ENCODE measurements at regions of chr20 and their contacts with region 1.

Region 1: DNA sequence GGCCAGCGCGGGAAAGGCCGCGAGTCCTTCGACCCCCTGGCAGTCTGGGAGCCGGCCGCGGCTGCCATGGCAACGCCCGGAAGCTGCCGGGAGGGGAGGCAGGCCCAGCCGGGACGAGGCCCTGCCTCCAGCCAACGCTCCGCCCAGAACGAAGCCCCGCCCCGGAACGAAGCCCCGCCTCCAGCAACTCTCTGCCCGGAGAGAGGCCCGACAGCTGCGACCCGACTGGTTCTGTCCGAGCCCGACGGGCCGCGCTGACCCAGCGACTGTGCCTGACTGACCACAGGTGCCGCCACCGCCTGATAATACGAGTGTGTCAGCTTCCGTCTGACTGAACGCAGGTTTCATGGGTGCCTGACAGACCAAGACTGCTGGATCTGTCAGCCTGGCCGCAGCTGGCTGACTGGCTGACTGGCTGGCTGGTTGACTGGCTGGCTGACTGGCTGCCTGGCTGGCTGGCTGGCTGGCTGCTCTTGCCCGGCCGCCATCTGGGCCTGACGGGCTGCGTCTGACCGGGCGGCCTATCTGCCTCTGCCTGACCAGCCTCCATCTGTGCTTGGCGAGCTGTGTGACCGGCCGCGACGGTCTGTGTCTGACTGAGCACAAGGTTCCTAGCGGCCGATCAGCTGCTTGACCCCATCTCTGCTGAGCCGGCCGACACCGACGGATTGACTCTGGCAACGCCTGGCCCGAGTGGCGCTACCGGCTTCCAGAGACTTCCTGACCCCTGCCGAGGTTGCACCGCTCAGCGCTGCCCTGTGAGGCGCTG is 89.7 kb upstream of the EPB41L1 start:
- DNase-seq: peak; percentile 95
- ATAC-seq: peak; percentile 98
- H3K4me3 Mint-ChIP-seq: peak overlapping the region; percentile 76
- H3K27ac Mint-ChIP-seq: no peak overlapping the region
- H3K4me1 Mint-ChIP-seq: no peaks in the 10 kb centered on the region
- H3K27me3 Mint-ChIP-seq: peaks cover 8% of the 10 kb centered on the region

Region 2: GRCh38 chr20:35771689-35772562 is 292.9 kb before region 1 on chr20 and contains the start of gene PHF20:
- CTCF ChIA-PET with region 1: no interaction called
- POLR2A ChIA-PET with region 1: interaction called, 3 read pairs
- intact Hi-C with region 1: loop called in 1 of 2 experiments (anchors 10 kb)
- DNase-seq: peak; percentile 100
- ATAC-seq: peak; percentile 91
- H3K4me3 Mint-ChIP-seq: peak within 1 kb of the TSS; percentile 81
- H3K27ac Mint-ChIP-seq: peak within 1 kb of the TSS; percentile 94
- H3K4me1 Mint-ChIP-seq: peaks cover 76% of the 10 kb centered on the region
- H3K27me3 Mint-ChIP-seq: no peaks in the 10 kb centered on the region
- total RNA-seq, gene PHF20: 54.3 to 61.6 TPM

Region 3: DNA sequence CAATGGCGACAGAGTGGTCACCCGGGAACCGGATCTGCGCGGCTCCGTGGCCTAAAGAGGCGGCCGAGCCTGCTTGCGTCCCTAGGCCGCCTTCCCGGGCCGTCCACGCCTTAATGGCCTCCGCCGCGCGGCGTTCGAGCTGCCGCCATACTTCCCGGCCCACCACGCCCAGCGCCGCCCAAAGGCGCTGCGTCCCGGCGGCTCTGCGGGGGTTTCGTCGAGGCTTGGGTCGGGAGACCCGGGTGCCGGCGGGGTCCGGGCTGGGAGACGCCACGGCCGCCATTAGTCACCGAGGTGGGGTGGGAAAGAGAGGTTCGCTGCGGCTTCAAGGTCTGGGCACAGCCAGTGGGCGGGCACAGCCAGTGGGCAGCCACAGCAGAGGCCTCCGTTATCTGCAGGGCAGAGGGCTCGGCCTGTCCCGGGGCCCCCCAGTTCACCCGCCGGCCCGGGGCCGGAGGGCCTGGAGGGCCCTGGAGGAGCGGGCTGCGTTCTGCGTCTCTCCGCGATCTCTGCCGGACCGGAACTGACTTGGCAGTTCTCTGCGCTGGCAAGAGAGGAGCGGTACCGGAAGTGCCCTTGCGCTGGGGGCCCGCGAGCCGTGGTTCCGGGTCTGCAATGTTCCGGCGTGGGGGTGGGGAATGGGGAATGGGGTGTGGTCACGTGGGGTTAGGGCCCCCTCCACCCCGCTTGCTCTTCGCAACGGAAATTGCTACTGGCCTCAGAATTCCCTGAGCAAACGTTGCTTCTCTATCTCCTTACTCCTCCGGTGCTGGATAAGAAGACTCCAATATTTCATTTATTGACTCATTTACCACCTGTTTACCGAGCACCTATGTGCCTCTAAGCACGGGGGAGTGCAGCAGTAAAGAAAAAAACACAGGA is 14.2 kb before region 1 on chr20:
- CTCF ChIA-PET with region 1: interaction called, 4 read pairs
- POLR2A ChIA-PET with region 1: no interaction called
- intact Hi-C with region 1: loop called (anchors 1 to 2 kb)
- DNase-seq: peak; percentile 95
- ATAC-seq: peak; percentile 98
- H3K4me3 Mint-ChIP-seq: peak overlapping the region; percentile 96
- H3K27ac Mint-ChIP-seq: peak overlapping the region; percentile 91
- H3K4me1 Mint-ChIP-seq: peaks cover 34% of the 10 kb centered on the region
- H3K27me3 Mint-ChIP-seq: no peaks in the 10 kb centered on the region

Region 4: GRCh38 chr20:36439040-36439730 is 374.3 kb after region 1 on chr20:
- CTCF ChIA-PET with region 1: no interaction called
- POLR2A ChIA-PET with region 1: no interaction called
- intact Hi-C with region 1: loop called in 1 of 2 experiments (anchors 1 kb)
- DNase-seq: peak; percentile 81
- ATAC-seq: peak; percentile 45
- H3K4me3 Mint-ChIP-seq: no peak overlapping the region
- H3K27ac Mint-ChIP-seq: no peak overlapping the region
- H3K4me1 Mint-ChIP-seq: peaks cover 2% of the 10 kb centered on the region
- H3K27me3 Mint-ChIP-seq: no peaks in the 10 kb centered on the region

Measured in activated CD4-positive, alpha-beta T cell treated with anti-CD3 and anti-CD28 coated beads for 36 hours (primary cell).